ENCODE measurements at regions of chr3 and their contacts with region 1.

Region 1: DNA sequence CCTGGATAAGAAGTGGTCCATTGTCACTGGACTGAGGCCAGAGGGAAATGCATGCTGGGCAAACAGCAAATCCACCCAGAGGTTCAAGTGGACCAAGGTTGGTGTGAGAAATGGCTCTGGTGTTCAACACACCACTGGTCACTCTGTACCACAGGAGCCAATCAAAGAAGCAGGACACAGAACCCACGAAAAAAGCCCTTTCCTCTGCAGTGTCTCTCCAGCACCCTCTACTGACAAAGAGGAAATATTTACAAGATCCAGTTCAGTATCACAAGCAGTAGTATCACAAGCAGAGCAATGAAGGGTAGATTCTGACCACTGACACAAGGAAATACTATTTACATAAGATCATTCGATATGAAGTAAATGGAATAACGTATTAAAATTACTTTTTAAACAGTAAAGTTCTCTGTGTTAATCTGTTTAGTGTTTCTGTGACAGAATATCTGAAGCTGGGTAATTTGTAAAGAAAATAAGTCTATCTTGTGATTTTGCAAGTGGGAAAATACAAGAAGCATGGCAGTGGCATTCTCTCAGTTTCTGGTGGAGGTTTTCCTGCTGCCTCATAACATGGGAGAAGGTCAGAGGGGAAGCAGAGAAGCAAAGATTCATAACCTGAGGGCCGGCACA is 390.7 kb downstream of the EFHB start:
- DNase-seq: peak; percentile 29
- H3K4me3 ChIP-seq: no peak overlapping the region
- H3K27ac ChIP-seq: no peak overlapping the region
- H3K4me1 ChIP-seq: no peaks in the 10 kb centered on the region
- H3K27me3 ChIP-seq: no peaks in the 10 kb centered on the region
- CTCF ChIP-seq: peak; percentile 47 to 84

Region 2: DNA sequence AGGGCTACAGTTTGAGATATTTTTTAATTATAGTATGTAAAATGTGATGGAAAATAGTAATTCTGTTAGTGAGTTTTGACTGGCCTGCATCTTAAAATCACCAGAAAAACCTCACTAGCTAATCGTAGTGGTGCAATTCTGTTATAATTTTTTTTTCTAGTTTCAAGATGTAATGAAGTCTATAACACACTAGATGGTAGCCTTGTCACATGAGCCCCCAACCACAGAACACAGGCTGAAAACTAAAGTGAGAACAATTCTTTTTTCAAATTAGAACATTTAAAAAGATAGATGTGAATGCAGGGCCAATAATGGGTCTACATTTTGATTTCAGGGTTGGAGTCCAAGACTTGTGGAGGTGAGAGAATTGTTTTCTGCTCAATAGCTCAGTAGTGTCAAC is 478.3 kb before region 1 on chr3:
- CTCF ChIA-PET with region 1: no interaction called
- dilution Hi-C with region 1: no loop called
- in situ Hi-C with region 1: no loop called
- intact Hi-C with region 1: loop called (anchors 5 kb)
- DNase-seq: no peak
- H3K4me3 ChIP-seq: no peak overlapping the region
- H3K27ac ChIP-seq: no peak overlapping the region
- H3K4me1 ChIP-seq: no peaks in the 10 kb centered on the region
- H3K27me3 ChIP-seq: no peaks in the 10 kb centered on the region
- CTCF ChIP-seq: no peak

Measured in mammary epithelial cell (primary cell).